Motor neuron (in vitro differentiated cells): ENCODE measurements at regions of chr6 and their contacts with region 1.

Region 1: DNA sequence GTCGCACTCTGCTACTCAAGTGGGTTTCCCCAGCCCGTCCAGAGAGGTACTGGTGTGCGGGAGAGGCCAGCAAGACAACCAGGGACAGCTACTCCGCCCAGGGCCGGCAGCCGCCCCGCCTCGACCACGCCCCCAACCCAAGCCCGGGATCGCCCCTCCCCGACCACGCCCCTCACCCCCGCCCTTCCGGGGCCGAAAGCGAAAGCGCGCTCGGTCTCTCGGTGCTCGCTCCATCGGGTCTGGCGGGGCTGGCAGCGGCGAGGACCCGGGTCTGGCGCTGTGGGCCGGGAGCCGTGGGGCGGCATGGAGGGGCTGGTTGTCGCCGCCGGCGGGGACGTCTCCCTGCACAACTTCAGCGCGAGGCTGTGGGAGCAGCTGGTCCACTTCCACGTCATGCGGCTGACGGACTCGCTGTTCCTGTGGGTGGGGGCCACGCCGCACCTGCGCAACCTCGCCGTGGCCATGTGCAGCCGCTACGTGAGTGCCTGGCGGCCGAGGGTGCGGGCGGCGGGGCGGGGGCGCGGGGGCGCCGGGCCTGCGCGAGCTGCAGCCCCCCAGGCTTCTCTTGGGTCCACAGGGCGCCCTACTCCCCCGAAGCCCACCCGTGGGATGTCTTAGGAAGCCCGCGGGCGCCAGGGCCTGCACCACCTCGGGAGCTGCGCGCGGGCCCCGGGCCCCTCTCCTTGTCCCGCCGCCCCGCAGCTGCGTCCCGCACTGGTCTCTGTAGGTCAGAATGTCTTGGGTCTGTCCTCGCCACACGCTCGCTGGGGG is at the start of gene PSMG4:
- ATAC-seq: peak; percentile 75 to 92 (median 89)
- H3K4me3 ChIP-seq: peak within 1 kb of the TSS; percentile 62 to 93 (median 68)
- H3K27ac ChIP-seq: peak within 1 kb of the TSS; percentile 62 to 85
- H3K4me1 ChIP-seq: peaks cover 13 to 22% of the 10 kb centered on the region in 2 donors
- total RNA-seq, gene PSMG4: 19.9 to 55.0 (median 30.1) TPM

Region 2: GRCh38 chr6:2725999-2726567 is 532.8 kb before region 1 on chr6:
- in situ Hi-C with region 1: no loop called
- ATAC-seq: no peak
- H3K4me3 ChIP-seq: no peak overlapping the region
- H3K27ac ChIP-seq: no peak overlapping the region
- H3K4me1 ChIP-seq: peaks cover 0 to 10% of the 10 kb centered on the region in 2 donors

Region 3: GRCh38 chr6:3139090-3139903 is 119.6 kb before region 1 on chr6:
- in situ Hi-C with region 1: loop called in 1 of 9 experiments (anchors 25 kb)
- ATAC-seq: peak; percentile 4 to 93 (median 55)
- H3K4me3 ChIP-seq: no peak overlapping the region
- H3K27ac ChIP-seq: no peak overlapping the region
- H3K4me1 ChIP-seq: peaks cover 0 to 11% of the 10 kb centered on the region in 2 donors

Region 4: GRCh38 chr6:4018172-4018905 is 759.4 kb after region 1 on chr6:
- in situ Hi-C with region 1: loop called in 2 of 9 experiments (anchors 25 kb)
- ATAC-seq: peak; percentile 54 to 80 (median 76)
- H3K4me3 ChIP-seq: peak overlapping the region; percentile 62 to 89 (median 71)
- H3K27ac ChIP-seq: peak overlapping the region; percentile 92 to 95
- H3K4me1 ChIP-seq: peaks cover 11 to 28% of the 10 kb centered on the region in 2 donors